Mammary epithelial cell (primary cell): ENCODE measurements at regions of chr20 and their contacts with region 1.

Region 1: DNA sequence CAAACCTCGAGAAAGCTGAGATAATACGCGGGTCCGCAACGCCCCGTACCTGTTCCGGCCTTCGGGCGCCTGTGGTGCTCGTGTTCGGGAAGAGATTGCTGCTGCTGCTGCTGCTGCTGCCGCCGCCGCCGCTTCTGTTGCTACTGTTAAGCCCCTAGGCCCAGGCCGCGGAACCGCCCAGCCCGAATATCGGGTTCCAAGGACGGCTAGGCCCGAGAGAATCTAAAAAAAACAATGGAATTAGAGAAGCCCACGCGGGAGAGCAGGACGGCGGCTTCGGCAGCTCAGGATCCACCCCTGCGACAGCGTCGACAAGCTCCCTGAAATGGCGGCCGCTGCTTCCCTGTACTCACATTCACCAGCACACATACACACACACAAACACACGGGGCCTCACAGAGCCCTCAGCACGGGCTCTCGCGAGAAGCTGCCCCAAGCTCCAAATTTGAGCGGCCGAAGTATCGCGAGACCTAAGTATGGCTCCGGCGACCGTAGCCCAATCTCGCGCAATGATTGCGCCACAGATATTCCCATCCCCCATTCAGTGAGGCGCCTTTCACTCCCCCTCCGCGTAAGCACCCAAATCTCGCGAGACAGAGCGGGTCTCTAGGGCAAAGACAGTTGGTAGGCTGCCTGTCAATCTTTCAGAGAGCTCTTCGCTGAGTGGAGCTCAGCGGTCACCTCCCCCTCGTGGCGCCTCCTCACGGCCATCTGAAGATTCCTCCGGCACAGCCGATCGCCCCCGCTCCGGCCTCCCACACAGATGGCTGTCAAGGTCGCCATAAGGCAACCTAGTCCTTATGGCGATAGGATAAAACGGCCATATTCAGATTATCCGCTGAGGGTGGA is at the start of gene RBM39:
- DNase-seq: peak; percentile 100
- H3K4me3 ChIP-seq: peak within 1 kb of the TSS; percentile 78 to 93 (median 86)
- H3K27ac ChIP-seq: peak within 1 kb of the TSS; percentile 95
- H3K4me1 ChIP-seq: peaks cover 26% of the 10 kb centered on the region
- H3K27me3 ChIP-seq: no peaks in the 10 kb centered on the region
- CTCF ChIP-seq: peak in 1 of 2 donors; percentile 47
- total RNA-seq, gene RBM39: 188 to 283 TPM

Region 2: GRCh38 chr20:35771689-35772562 is 29.8 kb after region 1 on chr20 and contains the start of gene PHF20:
- CTCF ChIA-PET with region 1: interaction called, 3 read pairs
- dilution Hi-C with region 1: loop called (anchors 5 kb)
- in situ Hi-C with region 1: no loop called
- intact Hi-C with region 1: loop called (anchors 1 kb)
- DNase-seq: peak; percentile 90
- H3K4me3 ChIP-seq: peak within 1 kb of the TSS; percentile 74 to 81 (median 79)
- H3K27ac ChIP-seq: peak within 1 kb of the TSS; percentile 86
- H3K4me1 ChIP-seq: peaks cover 29% of the 10 kb centered on the region
- H3K27me3 ChIP-seq: no peaks in the 10 kb centered on the region
- CTCF ChIP-seq: no peak
- total RNA-seq, gene PHF20: 24.0 to 39.7 TPM

Region 3: GRCh38 chr20:35791821-35792220 is 49.7 kb after region 1 on chr20:
- CTCF ChIA-PET with region 1: no interaction called
- dilution Hi-C with region 1: loop called (anchors 10 kb)
- in situ Hi-C with region 1: no loop called
- intact Hi-C with region 1: no loop called
- DNase-seq: peak; percentile 43
- H3K4me3 ChIP-seq: no peak overlapping the region
- H3K27ac ChIP-seq: no peak overlapping the region
- H3K4me1 ChIP-seq: no peaks in the 10 kb centered on the region
- H3K27me3 ChIP-seq: no peaks in the 10 kb centered on the region
- CTCF ChIP-seq: no peak

Region 4: GRCh38 chr20:35878113-35878625 is 136.1 kb after region 1 on chr20:
- CTCF ChIA-PET with region 1: no interaction called
- dilution Hi-C with region 1: loop called (anchors 5 kb)
- in situ Hi-C with region 1: loop called in 1 of 2 experiments (anchors 5 kb)
- intact Hi-C with region 1: no loop called
- DNase-seq: no peak
- H3K4me3 ChIP-seq: no peak overlapping the region
- H3K27ac ChIP-seq: no peak overlapping the region
- H3K4me1 ChIP-seq: peaks cover 36% of the 10 kb centered on the region
- H3K27me3 ChIP-seq: no peaks in the 10 kb centered on the region
- CTCF ChIP-seq: no peak